ENCODE measurements at regions of chr4 and their contacts with region 1.

Region 1: GRCh38 chr4:158193171-158193749 is 17.0 kb upstream of the TMEM144 start:
- DNase-seq: no peak
- H3K4me3 ChIP-seq: no peak overlapping the region
- H3K27ac ChIP-seq: no peak overlapping the region
- H3K4me1 ChIP-seq: no peaks in the 10 kb centered on the region
- H3K27me3 ChIP-seq: no peaks in the 10 kb centered on the region
- CTCF ChIP-seq: peak; percentile 27 to 55 (median 42)

Region 2: GRCh38 chr4:158020176-158020575 is 173.1 kb before region 1 on chr4:
- dilution Hi-C with region 1: loop called (anchors 25 kb)
- DNase-seq: no peak
- H3K4me3 ChIP-seq: no peak overlapping the region
- H3K27ac ChIP-seq: peak overlapping the region; percentile 41
- H3K4me1 ChIP-seq: peaks cover 19% of the 10 kb centered on the region
- H3K27me3 ChIP-seq: no peaks in the 10 kb centered on the region
- CTCF ChIP-seq: no peak

Region 3: DNA sequence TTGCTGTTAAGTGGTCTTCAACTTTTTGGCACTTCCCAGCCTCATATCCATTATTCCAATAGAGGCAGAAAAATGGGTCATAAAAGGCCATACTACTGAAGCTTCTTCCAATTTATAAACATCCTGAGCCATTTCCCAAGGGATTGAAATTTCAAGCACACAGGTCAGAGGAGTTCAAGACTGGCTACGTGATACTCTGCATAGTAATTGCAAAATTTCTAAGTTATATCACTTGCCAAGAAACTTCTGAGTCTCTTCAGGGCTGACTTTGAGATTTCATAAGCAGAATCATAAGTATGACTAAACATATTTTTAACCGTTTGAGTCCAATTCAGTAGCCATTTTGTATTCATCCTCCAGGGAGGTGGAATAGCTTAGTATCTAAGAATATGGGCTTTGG is 252.8 kb after region 1 on chr4:
- dilution Hi-C with region 1: no loop called
- DNase-seq: no peak
- H3K4me3 ChIP-seq: no peak overlapping the region
- H3K27ac ChIP-seq: no peak overlapping the region
- H3K4me1 ChIP-seq: peaks cover 3% of the 10 kb centered on the region
- H3K27me3 ChIP-seq: no peaks in the 10 kb centered on the region
- CTCF ChIP-seq: no peak

Region 4: DNA sequence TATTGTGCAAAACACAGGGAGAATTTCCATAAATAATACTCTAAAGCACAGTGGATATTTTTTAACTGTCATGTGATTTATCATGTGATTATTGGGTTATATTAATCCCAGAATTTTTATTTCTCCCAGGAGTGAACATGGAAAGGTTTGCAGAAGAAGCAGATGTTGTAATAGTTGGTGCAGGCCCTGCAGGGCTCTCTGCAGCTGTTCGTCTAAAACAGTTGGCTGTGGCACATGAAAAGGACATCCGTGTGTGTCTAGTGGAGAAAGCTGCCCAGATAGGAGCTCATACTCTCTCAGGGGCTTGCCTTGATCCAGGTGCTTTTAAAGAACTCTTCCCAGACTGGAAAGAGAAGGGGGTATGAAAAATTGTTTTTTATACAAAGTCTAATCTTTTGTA is 488.8 kb after region 1 on chr4:
- dilution Hi-C with region 1: no loop called
- DNase-seq: no peak
- H3K4me3 ChIP-seq: no peak overlapping the region
- H3K27ac ChIP-seq: no peak overlapping the region
- H3K4me1 ChIP-seq: no peaks in the 10 kb centered on the region
- H3K27me3 ChIP-seq: no peaks in the 10 kb centered on the region
- CTCF ChIP-seq: no peak

Measured in keratinocyte (primary cell).